Cardiac septum (tissue), 1 donor: ENCODE measurements at regions of chr4 and their contacts with region 1.

Region 1: DNA sequence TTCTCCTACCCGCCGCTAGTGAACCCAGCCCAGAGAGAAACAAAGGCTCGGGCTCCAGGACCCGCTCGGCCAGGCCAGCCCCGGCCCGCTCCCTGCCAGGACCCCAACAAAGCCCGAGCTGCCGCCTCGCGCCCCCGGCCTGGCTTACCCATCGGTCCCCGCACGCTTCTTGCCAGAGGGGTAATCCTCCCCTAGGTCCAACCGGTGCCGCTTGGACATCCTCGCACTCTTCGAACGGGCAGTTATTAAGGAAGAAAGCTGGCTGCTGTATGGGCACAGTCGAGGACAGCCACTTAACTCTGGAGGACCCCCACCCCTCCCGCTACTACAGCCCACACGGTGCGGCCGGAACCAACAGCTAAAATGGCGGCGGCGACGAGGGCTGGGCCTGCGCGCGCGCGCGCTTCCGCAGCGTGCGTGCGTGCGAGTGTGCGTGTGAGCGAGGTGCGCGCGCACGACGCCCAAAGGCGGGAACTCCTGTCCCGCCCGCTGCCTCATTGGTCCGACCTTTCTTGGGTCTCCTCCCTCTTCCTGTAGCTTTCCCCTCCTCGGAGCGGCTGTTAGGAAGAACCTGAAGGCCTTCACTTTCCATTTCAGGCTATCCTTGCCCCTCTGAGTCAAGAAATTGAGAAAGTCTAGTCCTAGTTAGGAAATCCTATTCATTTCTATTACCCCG is at the start of gene DHX15:
- DNase-seq: peak; percentile 97
- total RNA-seq, gene DHX15: 62.6 TPM

Region 2: DNA sequence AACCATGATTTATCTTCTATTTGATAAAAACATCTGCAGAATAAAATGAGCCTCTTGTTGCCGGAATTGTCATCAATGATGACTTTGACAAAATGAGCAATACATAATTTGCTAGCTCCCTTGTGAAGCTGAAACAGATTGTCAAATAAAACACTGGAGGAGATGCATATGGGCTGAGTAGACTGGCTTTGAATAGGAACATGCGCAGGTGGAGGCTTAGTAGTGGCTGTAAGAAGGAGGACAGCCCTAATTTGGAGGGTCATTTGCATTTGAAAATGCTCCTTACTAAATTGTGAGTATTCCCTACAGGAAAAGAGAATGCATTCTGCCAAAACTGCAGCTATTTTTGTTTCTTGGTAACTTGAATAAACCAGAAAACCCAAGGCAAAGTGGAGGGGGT is 1023.6 kb before region 1 on chr4:
- intact Hi-C with region 1: no loop called
- DNase-seq: no peak

Region 3: DNA sequence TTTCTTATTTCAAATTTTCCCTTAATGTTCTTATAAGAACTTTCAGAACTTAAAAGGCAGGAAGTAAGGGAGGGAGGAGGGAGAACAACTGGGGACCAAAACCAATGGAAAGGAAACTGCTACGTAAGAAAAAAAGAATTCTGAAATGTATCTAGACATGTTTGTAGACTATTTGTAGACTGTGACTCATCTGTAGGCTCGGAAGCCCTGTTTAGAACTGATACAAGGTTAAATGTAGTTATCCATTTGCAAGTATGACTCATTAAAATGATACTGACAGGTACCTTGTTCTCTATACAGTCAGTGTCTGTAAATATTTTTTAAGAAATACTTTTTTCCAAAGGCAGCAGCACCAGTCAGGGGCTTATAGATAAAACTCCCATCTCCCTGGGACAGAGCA is 201.9 kb before region 1 on chr4:
- intact Hi-C with region 1: no loop called
- DNase-seq: no peak

Region 4: GRCh38 chr4:24472514-24473308 is 111.6 kb before region 1 on chr4:
- intact Hi-C with region 1: loop called (anchors 2 kb)
- DNase-seq: peak; percentile 86

Region 5: GRCh38 chr4:24912252-24913118 is 328.2 kb after region 1 on chr4 and contains the start of gene CCDC149:
- intact Hi-C with region 1: loop called (anchors 5 kb)
- DNase-seq: peak; percentile 80
- total RNA-seq, gene CCDC149: 11.7 TPM

Region 6: GRCh38 chr4:25913851-25914669 is 1329.7 kb after region 1 on chr4 and contains the start of gene SMIM20:
- intact Hi-C with region 1: loop called (anchors 5 kb)
- DNase-seq: peak; percentile 97
- total RNA-seq, gene SMIM20: 34.7 TPM